ENCODE measurements at regions of chr7 and their contacts with region 1.

Region 1: DNA sequence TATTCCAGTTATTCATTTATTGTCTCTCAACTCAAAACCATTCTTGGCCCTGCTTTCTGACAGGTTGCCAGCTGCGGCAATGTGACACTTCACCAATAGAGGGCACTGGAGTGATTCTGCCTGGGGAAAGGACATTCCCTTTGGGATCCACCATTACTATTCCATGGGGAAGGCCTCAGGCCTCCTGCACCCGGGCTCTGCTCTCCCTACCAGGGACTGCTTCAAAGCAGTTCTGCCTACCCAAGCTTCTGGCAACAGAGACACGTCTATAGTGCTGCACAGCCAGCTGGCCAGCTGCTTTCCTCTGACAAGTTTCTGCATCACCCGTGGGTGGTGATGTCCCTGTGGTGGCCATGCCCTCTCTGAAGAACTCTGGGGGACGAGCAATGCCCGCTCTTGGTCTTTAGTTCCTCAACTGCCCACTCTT is 163.8 kb downstream of the ELMO1 start:
- DNase-seq: peak; percentile 23 to 85
- H3K4me3 ChIP-seq: no peak overlapping the region
- H3K27ac ChIP-seq: no peak overlapping the region
- H3K4me1 ChIP-seq: peaks cover 0 to 16% (median 3%) of the 10 kb centered on the region in 4 experiments; a peak in 5 of 7 replicates
- H3K27me3 ChIP-seq: no peaks in the 10 kb centered on the region
- CTCF ChIP-seq: peak; percentile 80 to 90 (median 86)
- EP300 ChIP-seq: no peak; a peak in 1 of 3 replicates
- POLR2A ChIP-seq: no peak
- RAD21 ChIP-seq: peak; percentile 91 to 92

Region 2: GRCh38 chr7:37269711-37270508 is 14.9 kb before region 1 on chr7:
- CTCF ChIA-PET with region 1: interaction called, 22 read pairs
- POLR2A ChIA-PET with region 1: no interaction called
- DNase-seq: no peak
- H3K4me3 ChIP-seq: no peak overlapping the region
- H3K27ac ChIP-seq: no peak overlapping the region
- H3K4me1 ChIP-seq: no peaks in the 10 kb centered on the region
- H3K27me3 ChIP-seq: no peaks in the 10 kb centered on the region
- CTCF ChIP-seq: no peak
- EP300 ChIP-seq: no peak
- POLR2A ChIP-seq: no peak
- RAD21 ChIP-seq: no peak

Region 3: GRCh38 chr7:37297546-37297945 is 12.7 kb after region 1 on chr7:
- CTCF ChIA-PET with region 1: interaction called, 20 read pairs
- POLR2A ChIA-PET with region 1: no interaction called
- DNase-seq: no peak
- H3K4me3 ChIP-seq: no peak overlapping the region
- H3K27ac ChIP-seq: no peak overlapping the region
- H3K4me1 ChIP-seq: no peaks in the 10 kb centered on the region
- H3K27me3 ChIP-seq: no peaks in the 10 kb centered on the region
- CTCF ChIP-seq: no peak
- EP300 ChIP-seq: no peak
- POLR2A ChIP-seq: no peak
- RAD21 ChIP-seq: no peak

Region 4: GRCh38 chr7:37352974-37353948 is 68.4 kb after region 1 on chr7:
- CTCF ChIA-PET with region 1: interaction called, 14 read pairs
- POLR2A ChIA-PET with region 1: no interaction called
- DNase-seq: peak; percentile 17 to 55
- H3K4me3 ChIP-seq: no peak overlapping the region
- H3K27ac ChIP-seq: no peak overlapping the region
- H3K4me1 ChIP-seq: peaks cover 2 to 7% (median 5%) of the 10 kb centered on the region in 4 experiments; a peak in 5 of 7 replicates
- H3K27me3 ChIP-seq: no peaks in the 10 kb centered on the region
- CTCF ChIP-seq: peak; percentile 50 to 72 (median 65)
- EP300 ChIP-seq: no peak
- POLR2A ChIP-seq: no peak
- RAD21 ChIP-seq: peak; percentile 77 to 83

Region 5: GRCh38 chr7:37448636-37449361 is 164.0 kb after region 1 on chr7 and contains the start of gene ELMO1:
- CTCF ChIA-PET with region 1: interaction called, 12 read pairs
- POLR2A ChIA-PET with region 1: no interaction called
- DNase-seq: peak; percentile 70 to 81
- H3K4me3 ChIP-seq: peak within 1 kb of the TSS; percentile 70 to 93 (median 74)
- H3K27ac ChIP-seq: no peak within 1 kb of the TSS
- H3K4me1 ChIP-seq: peaks cover 0 to 15% (median 3%) of the 10 kb centered on the region in 4 experiments; a peak in 4 of 7 replicates
- H3K27me3 ChIP-seq: no peaks in the 10 kb centered on the region; a peak in 2 of 7 replicates
- CTCF ChIP-seq: peak; percentile 59 to 60 (median 59)
- EP300 ChIP-seq: no peak
- POLR2A ChIP-seq: peak in 1 of 2 experiments; percentile 75; a peak in 2 of 3 replicates
- RAD21 ChIP-seq: peak; percentile 42 to 57
- total RNA-seq, gene ELMO1: 18.4 and 20.6 TPM in 2 replicates

Region 6: GRCh38 chr7:37510043-37510634 is 225.3 kb after region 1 on chr7:
- CTCF ChIA-PET with region 1: interaction called, 31 read pairs
- POLR2A ChIA-PET with region 1: no interaction called
- DNase-seq: no peak
- H3K4me3 ChIP-seq: no peak overlapping the region
- H3K27ac ChIP-seq: no peak overlapping the region
- H3K4me1 ChIP-seq: no peaks in the 10 kb centered on the region; a peak in 1 of 7 replicates
- H3K27me3 ChIP-seq: no peaks in the 10 kb centered on the region
- CTCF ChIP-seq: peak; percentile 36 to 77 (median 66)
- EP300 ChIP-seq: no peak
- POLR2A ChIP-seq: no peak
- RAD21 ChIP-seq: peak; percentile 74 to 77

Measured in H1 (cell line).